ENCODE measurements at regions of chr6 and their contacts with region 1.

Region 1: DNA sequence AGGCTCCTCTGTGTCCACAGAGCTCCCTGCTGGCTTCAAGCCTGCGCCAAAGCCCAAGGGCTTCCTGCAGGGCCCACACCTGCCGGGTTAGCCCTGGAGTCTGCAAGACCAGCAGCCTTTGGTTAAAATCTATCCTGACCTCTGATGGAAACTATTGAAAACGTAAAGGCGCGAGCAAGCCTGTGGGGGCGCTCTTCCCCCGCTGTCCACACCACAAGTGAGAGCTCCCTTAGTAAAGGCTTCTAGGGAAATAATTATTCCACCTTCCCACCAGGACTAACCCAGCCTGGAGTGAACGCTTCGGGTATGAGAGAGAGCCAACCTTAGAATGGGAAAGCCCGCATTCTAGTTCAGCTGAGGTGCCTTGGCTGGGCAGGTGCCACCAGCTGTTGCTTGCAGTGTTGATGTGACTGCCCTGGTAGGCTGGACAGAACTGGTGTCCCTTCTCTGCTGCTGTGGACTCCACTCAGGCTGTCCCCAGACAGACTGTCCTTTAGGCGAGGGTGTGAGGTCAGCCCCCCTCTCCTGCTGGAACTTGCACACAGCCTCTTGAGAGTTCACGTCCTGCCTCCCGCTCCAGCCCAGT is 68.7 kb downstream of the SYTL3 start:
- DNase-seq: peak; percentile 77
- ATAC-seq: peak; percentile 55
- H3K4me3 ChIP-seq: no peak overlapping the region
- H3K27ac ChIP-seq: peak overlapping the region; percentile 97
- H3K4me1 ChIP-seq: peaks cover 73 to 92% of the 10 kb centered on the region in 2 experiments
- H3K27me3 ChIP-seq: no peaks in the 10 kb centered on the region
- CTCF ChIP-seq: peak in 2 of 3 experiments; percentile 99 to 100; a peak in 4 of 6 replicates
- POLR2A ChIP-seq: no peak
- RAD21 ChIP-seq: no peak

Region 2: DNA sequence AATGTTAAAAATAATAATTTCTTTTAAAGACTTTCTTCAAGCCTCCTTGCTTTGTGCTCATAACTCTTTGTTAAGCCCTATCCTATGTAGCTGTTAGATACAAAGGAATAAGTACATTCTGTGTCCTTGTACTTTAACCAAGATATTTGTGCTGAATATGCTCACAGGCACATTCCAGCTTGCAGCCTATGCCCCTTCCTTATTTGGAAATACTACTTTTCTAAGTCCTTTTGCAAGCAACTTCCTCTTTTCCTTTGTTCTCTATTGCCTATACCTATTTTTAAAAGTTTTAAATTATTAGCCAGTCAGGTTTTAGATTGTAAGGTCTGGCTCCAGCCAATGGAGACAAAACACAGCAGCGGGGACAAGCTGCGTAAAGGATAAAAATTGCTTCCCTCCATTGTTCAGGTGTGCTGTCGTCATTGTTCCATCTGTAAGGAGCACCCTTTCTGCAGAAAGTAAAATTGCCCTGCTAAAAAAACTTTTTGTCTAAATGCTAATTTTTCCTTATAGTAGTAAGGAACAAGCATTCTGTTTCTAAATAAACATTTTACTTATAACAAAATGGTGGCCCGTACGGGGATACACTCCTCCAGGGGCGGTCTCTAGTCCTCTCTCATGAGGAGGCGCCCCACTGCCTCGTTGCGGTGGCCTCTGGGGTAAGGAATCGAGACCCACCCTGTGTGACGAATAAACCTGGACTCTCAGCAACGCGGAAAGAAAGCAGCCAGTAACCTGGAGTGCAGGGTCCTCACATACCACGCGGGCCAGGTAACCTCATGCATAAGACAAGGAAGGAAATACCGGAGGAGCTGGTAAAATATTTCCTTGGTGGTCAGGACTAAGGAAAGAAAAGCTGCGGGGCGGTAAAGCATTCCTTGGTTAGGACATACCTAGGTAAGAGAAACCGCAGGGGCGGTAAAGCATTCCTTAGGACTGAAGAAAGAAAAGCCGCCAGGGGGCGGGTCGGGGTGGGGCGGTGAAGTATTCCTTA is 11.7 kb after region 1 on chr6:
- CTCF ChIA-PET with region 1: interaction called, 21 read pairs
- POLR2A ChIA-PET with region 1: interaction called, 26 read pairs
- RAD21 ChIA-PET with region 1: interaction called, 3 to 4 read pairs
- intact Hi-C with region 1: loop called (anchors 1 kb)
- DNase-seq: peak; percentile 100
- ATAC-seq: peak; percentile 85
- H3K4me3 ChIP-seq: peak overlapping the region; percentile 7 to 12; a peak in 2 of 4 replicates
- H3K27ac ChIP-seq: peak overlapping the region; percentile 97
- H3K4me1 ChIP-seq: peaks cover 44 to 79% of the 10 kb centered on the region in 2 experiments
- H3K27me3 ChIP-seq: no peaks in the 10 kb centered on the region
- CTCF ChIP-seq: no peak
- POLR2A ChIP-seq: peak; percentile 37
- RAD21 ChIP-seq: no peak

Region 3: GRCh38 chr6:158743033-158743651 is 24.6 kb after region 1 on chr6:
- CTCF ChIA-PET with region 1: interaction called, 14 read pairs
- POLR2A ChIA-PET with region 1: interaction called, 19 read pairs
- RAD21 ChIA-PET with region 1: no interaction called
- intact Hi-C with region 1: no loop called
- DNase-seq: no peak
- ATAC-seq: peak; percentile 64
- H3K4me3 ChIP-seq: no peak overlapping the region
- H3K27ac ChIP-seq: peak overlapping the region; percentile 54
- H3K4me1 ChIP-seq: peaks cover 55 to 83% of the 10 kb centered on the region in 2 experiments
- H3K27me3 ChIP-seq: no peaks in the 10 kb centered on the region
- CTCF ChIP-seq: no peak
- POLR2A ChIP-seq: no peak
- RAD21 ChIP-seq: no peak

Region 4: DNA sequence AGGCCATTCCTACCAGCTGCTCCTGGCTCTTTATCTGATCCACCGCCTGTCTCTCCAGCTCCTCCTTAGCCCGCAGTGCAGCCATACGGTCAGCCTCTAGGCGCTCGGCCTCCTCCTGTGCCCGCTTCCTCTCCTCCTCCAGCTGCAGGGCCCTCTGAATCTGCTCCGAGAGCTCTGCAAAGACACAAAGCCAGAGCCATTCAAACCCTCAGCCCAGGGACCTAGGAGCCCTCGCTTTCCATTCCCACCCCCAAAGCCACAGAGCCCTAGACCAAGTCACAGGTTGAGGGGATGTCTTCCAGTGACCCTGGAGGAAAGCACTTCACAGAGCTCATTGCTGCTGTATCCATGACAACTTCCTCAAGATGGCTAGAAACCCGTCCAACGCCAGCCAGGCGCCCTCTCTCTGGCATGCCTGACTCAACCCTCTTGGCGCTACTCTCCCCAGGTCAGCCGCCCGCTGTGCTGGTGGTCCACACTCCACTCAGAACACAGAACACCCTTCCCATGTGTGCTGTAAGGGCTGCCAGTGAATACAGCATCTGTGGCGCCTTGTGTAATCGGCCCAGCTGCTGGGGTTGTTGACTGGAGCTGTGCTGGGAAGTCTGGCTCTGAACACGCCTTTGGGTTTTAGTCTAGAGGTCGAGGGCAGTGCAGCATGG is 51.3 kb after region 1 on chr6:
- CTCF ChIA-PET with region 1: interaction called, 13 read pairs
- POLR2A ChIA-PET with region 1: interaction called, 5 read pairs
- RAD21 ChIA-PET with region 1: interaction called in 1 of 2 experiments, 3 read pairs
- intact Hi-C with region 1: no loop called
- DNase-seq: no peak
- ATAC-seq: no peak
- H3K4me3 ChIP-seq: no peak overlapping the region
- H3K27ac ChIP-seq: peak overlapping the region; percentile 57
- H3K4me1 ChIP-seq: peaks cover 13 to 100% of the 10 kb centered on the region in 2 experiments
- H3K27me3 ChIP-seq: no peaks in the 10 kb centered on the region
- CTCF ChIP-seq: no peak
- POLR2A ChIP-seq: no peak
- RAD21 ChIP-seq: no peak

Region 5: DNA sequence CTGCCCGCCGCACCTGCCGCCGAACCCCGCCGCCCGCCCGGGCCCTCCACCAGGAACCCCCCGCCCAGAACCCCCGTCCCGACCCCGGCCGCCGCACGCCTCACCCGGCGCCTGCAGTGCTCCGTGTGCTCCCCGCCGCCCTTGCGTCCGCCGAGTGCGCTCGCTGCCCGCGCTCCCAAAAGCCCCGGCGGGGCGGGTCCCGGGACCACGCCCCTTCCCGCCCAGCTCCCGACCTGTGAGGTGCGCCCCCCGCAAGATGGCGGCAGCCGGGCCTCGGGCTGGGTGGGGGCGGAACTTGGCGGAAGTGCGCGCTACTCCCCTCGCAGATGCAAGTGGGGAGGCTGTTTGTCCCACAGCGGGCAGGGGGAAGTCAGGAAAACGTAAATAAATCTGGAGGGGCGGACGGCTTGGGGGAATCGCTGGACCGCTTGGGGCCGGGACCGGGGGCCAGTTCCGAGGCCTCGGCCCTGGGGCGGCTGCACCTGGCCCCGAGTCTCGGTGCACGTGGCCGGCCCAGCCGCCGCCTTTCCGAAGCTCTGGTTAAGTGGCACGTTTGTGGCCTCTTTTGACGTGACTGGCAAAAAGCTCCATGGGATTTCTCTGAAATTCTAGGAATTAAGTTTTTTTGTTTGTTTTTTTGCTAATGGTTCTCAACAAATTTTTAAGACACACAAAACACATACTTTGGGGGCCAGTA is 100.8 kb after region 1 on chr6 and contains the start of gene EZR:
- CTCF ChIA-PET with region 1: no interaction called
- POLR2A ChIA-PET with region 1: no interaction called
- RAD21 ChIA-PET with region 1: no interaction called
- intact Hi-C with region 1: no loop called
- DNase-seq: peak; percentile 73
- ATAC-seq: peak; percentile 73
- H3K4me3 ChIP-seq: peak within 1 kb of the TSS; percentile 77 to 81
- H3K27ac ChIP-seq: peak within 1 kb of the TSS; percentile 92
- H3K4me1 ChIP-seq: peaks cover 28 to 39% of the 10 kb centered on the region in 2 experiments
- H3K27me3 ChIP-seq: no peaks in the 10 kb centered on the region
- CTCF ChIP-seq: 0 out of 6 replicates have a peak, but pooled peaks of 1 of the 3 experiments have one; percentile 2
- POLR2A ChIP-seq: peak; percentile 80
- RAD21 ChIP-seq: no peak
- total RNA-seq, gene EZR: 1,402 TPM

Region 6: DNA sequence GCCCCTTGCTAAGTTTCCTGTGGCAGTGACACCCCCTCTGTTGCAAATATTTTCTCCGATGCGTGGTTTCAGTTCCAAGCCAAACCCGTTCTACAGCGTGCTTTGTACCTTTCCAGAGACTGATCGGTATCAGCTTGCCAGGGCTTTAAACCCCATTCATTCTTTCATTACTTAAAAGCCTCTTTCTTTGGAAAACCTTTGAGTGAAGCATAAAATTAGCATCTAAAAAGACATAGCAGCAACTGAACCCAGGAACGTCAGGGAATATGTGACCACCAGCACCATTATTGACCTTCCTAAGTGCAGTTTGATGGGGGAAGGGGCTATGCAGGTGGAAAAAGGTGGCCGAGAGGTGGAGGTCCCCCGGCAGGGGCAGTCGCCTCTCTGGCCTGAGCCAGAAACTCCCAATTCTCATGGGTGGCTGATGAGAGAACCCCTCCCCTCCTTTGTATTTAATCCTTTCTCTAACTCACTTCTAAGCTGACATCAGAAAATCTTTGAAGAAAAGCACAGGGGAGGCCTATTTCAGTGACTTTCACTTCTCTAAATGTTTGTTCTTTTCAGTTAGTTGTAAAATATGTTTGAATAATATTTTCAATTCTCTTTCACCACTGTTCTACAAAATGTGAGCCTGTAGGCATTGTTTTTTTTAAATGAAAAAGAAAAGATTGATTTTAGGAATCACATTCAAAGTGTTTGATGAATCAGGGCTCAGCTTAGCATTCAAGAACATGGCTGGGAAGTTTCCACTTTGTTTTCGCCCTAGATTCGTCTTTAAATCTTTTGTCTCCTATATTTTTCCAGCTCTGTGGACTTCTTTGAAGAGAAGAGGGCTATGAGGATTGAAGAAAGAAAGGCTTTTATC is 192.2 kb after region 1 on chr6:
- CTCF ChIA-PET with region 1: no interaction called
- POLR2A ChIA-PET with region 1: no interaction called
- RAD21 ChIA-PET with region 1: no interaction called
- intact Hi-C with region 1: no loop called
- DNase-seq: no peak
- ATAC-seq: peak; percentile 42; the same call in 1 of the 2 replicates
- H3K4me3 ChIP-seq: 0 out of 4 replicates have a peak overlapping the region, but pooled peaks of 1 of the 2 experiments have one; percentile 1
- H3K27ac ChIP-seq: peak overlapping the region; percentile 32; the same call in 1 of the 2 replicates
- H3K4me1 ChIP-seq: peaks cover 28 to 35% of the 10 kb centered on the region in 2 experiments
- H3K27me3 ChIP-seq: no peaks in the 10 kb centered on the region
- CTCF ChIP-seq: no peak
- POLR2A ChIP-seq: no peak
- RAD21 ChIP-seq: no peak

Measured in HCT116 (cell line).